ENCODE measurements at regions of chr19 and their contacts with region 1.

Region 1: GRCh38 chr19:11699931-11700794 is 38.6 kb downstream of the ZNF823 start:
- DNase-seq: no peak
- ATAC-seq: peak; percentile 61
- H3K4me3 Mint-ChIP-seq: no peak overlapping the region
- H3K27ac Mint-ChIP-seq: peak overlapping the region; percentile 36; the same call in 1 of the 2 replicates
- H3K4me1 Mint-ChIP-seq: 0 out of 2 replicates have a peak, but pooled peaks cover 5% of the 10 kb centered on the region
- H3K27me3 Mint-ChIP-seq: peaks cover 18% of the 10 kb centered on the region
- CTCF ChIP-seq: peak; percentile 41

Region 2: GRCh38 chr19:11566164-11566563 is 134.0 kb before region 1 on chr19:
- CTCF ChIA-PET with region 1: no interaction called
- POLR2A ChIA-PET with region 1: no interaction called
- DNase-seq: no peak
- ATAC-seq: no peak
- H3K4me3 Mint-ChIP-seq: no peak overlapping the region
- H3K27ac Mint-ChIP-seq: peak overlapping the region; percentile 95; the same call in 1 of the 2 replicates
- H3K4me1 Mint-ChIP-seq: no peaks in the 10 kb centered on the region
- H3K27me3 Mint-ChIP-seq: no peaks in the 10 kb centered on the region
- CTCF ChIP-seq: no peak

Region 3: GRCh38 chr19:11659612-11660011 is 40.6 kb before region 1 on chr19:
- CTCF ChIA-PET with region 1: interaction called, 10 read pairs
- POLR2A ChIA-PET with region 1: no interaction called
- DNase-seq: no peak
- ATAC-seq: 0 out of 2 replicates have a peak, but pooled peaks have one; percentile 24
- H3K4me3 Mint-ChIP-seq: no peak overlapping the region
- H3K27ac Mint-ChIP-seq: no peak overlapping the region
- H3K4me1 Mint-ChIP-seq: peaks cover 9% of the 10 kb centered on the region
- H3K27me3 Mint-ChIP-seq: no peaks in the 10 kb centered on the region
- CTCF ChIP-seq: 0 out of 2 replicates have a peak, but pooled peaks have one; percentile 26

Region 4: DNA sequence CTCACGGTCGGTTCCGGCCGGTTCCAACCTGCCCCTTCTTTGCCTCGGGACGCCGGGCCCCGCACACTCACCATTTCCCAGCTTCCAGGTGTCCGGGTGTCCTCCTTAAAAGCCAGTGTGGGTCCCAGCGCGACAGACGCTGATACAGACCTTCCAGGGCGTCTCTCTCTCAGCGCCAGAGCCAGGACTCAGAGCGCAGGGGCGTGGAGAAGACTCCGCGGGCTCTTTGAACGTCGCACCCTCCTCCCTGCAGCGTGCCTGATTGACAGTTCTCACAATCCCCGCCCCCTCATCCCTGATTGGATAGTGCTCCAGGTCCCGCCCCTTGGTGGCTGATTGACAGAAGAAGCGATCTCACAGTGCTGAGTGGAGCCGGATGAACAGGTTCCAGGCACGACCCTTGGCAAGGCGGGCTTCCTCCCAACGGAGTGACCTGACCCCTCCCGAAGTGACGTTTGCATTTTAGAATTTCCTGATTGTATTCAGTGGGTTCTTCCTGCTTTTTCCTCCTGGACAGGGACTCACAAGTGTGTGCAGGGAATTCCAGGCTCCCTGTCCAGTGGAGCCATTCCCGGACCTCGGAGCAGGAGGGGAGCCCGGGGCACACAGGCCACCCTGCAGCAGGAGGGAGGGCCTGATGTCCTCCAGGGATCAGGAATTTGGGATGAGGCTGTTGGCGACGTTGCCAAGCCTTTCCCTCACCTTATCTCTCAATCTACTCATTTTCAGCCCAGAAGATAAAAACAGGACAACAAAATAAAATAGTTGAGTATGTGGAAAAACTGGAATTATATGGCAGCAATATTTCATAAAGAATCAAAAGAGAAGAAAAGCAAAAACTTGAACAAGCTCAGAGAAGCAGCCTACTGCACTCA is 38.8 kb after region 1 on chr19 and contains the start of gene ZNF823:
- CTCF ChIA-PET with region 1: interaction called, 15 read pairs
- POLR2A ChIA-PET with region 1: interaction called, 3 read pairs
- DNase-seq: peak; percentile 99
- ATAC-seq: peak; percentile 96
- H3K4me3 Mint-ChIP-seq: peak within 1 kb of the TSS; percentile 98
- H3K27ac Mint-ChIP-seq: peak within 1 kb of the TSS; percentile 96
- H3K4me1 Mint-ChIP-seq: peaks cover 10% of the 10 kb centered on the region
- H3K27me3 Mint-ChIP-seq: peaks cover 42% of the 10 kb centered on the region
- CTCF ChIP-seq: no peak
- total RNA-seq, gene ZNF823: 4.4 to 5.4 TPM (median 4.6 TPM) in 3 replicates

Region 5: GRCh38 chr19:11781295-11782052 is 81.3 kb after region 1 on chr19:
- CTCF ChIA-PET with region 1: no interaction called
- POLR2A ChIA-PET with region 1: no interaction called
- DNase-seq: no peak
- ATAC-seq: no peak
- H3K4me3 Mint-ChIP-seq: no peak overlapping the region
- H3K27ac Mint-ChIP-seq: no peak overlapping the region
- H3K4me1 Mint-ChIP-seq: peaks cover 2% of the 10 kb centered on the region; the same call in 1 of the 2 replicates
- H3K27me3 Mint-ChIP-seq: peaks cover 9% of the 10 kb centered on the region
- CTCF ChIP-seq: no peak

Measured in WTC11 (cell line).